HepG2 (cell line): ENCODE measurements at regions of chr16 and their contacts with region 1.

Region 1: DNA sequence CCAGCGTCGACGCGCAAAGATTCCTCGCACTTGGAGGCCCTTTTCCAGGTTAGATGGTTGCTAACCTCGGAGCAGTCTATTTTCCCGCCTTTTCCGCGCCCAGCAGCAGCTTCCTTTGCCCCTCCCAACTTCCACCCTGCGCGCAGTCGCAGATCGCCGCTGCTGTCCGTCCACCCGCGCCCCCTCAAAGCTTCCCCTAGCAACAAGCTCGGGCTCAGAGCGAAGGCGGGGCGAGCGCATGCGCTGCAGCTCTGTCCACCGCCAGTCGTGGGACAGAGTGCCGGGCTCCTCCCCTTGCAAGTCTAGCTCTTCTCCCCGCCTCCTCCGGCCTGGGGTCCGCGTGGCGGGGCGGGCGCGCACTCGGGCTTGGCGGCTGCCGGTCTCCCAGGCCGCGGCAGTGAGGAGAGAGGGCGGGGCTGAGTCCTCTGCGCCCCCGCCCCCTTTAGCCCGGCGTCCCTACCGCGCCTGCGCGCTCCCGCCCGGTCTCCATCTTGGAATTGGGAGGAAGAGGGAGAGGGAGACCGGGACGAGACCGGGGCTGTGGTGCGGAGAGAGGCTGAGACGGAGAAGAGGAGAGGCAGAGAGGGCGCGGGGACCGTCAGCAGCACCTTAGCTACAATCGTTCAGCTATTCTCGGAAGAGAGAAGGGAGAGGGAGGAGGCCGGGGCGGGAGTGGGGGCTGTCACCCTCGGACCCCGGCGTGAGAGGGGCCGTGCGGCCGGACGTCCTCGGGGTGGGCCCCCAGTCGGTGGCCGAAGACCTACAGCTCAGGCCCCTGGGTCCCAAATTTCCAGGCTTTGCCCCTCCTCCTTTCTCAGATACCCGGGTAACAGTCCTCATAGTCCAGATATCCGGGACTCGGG is at the start of gene TAOK2:
- DNase-seq: peak; percentile 98
- ATAC-seq: peak; percentile 95
- H3K4me3 ChIP-seq: peak within 1 kb of the TSS; percentile 86 to 99 (median 91)
- H3K27ac ChIP-seq: peak within 1 kb of the TSS; percentile 72
- H3K4me1 ChIP-seq: peaks cover 30% of the 10 kb centered on the region
- H3K27me3 ChIP-seq: no peaks in the 10 kb centered on the region; a peak in 1 of 5 replicates
- CTCF ChIP-seq: peak; percentile 11; the same call in 1 of the 2 replicates
- EP300 ChIP-seq: peak in 1 of 2 experiments; percentile 65; a peak in 2 of 4 replicates
- POLR2A ChIP-seq: peak; percentile 72 to 89
- RAD21 ChIP-seq: peak; percentile 5
- total RNA-seq, gene TAOK2: 27.6 and 43.2 TPM in 2 replicates

Region 2: GRCh38 chr16:28991687-28992086 is 981.9 kb before region 1 on chr16:
- CTCF ChIA-PET with region 1: no interaction called
- POLR2A ChIA-PET with region 1: no interaction called
- in situ Hi-C with region 1: no loop called
- intact Hi-C with region 1: no loop called
- DNase-seq: no peak
- ATAC-seq: peak; percentile 42
- H3K4me3 ChIP-seq: no peak overlapping the region
- H3K27ac ChIP-seq: no peak overlapping the region
- H3K4me1 ChIP-seq: peaks cover 8% of the 10 kb centered on the region
- H3K27me3 ChIP-seq: no peaks in the 10 kb centered on the region
- CTCF ChIP-seq: no peak
- EP300 ChIP-seq: no peak
- POLR2A ChIP-seq: no peak
- RAD21 ChIP-seq: no peak

Region 3: GRCh38 chr16:29852654-29853053 is 121.0 kb before region 1 on chr16:
- CTCF ChIA-PET with region 1: no interaction called
- POLR2A ChIA-PET with region 1: no interaction called
- in situ Hi-C with region 1: no loop called
- intact Hi-C with region 1: no loop called
- DNase-seq: no peak
- ATAC-seq: no peak
- H3K4me3 ChIP-seq: no peak overlapping the region
- H3K27ac ChIP-seq: no peak overlapping the region
- H3K4me1 ChIP-seq: no peaks in the 10 kb centered on the region
- H3K27me3 ChIP-seq: no peaks in the 10 kb centered on the region
- CTCF ChIP-seq: no peak
- EP300 ChIP-seq: no peak
- POLR2A ChIP-seq: no peak
- RAD21 ChIP-seq: no peak

Region 4: GRCh38 chr16:29891525-29892457 is 81.8 kb before region 1 on chr16:
- CTCF ChIA-PET with region 1: no interaction called
- POLR2A ChIA-PET with region 1: no interaction called
- in situ Hi-C with region 1: no loop called
- intact Hi-C with region 1: no loop called
- DNase-seq: peak; percentile 95
- ATAC-seq: peak; percentile 87
- H3K4me3 ChIP-seq: peak overlapping the region in 2 of 3 experiments; percentile 2 to 31; a peak in 2 of 6 replicates
- H3K27ac ChIP-seq: peak overlapping the region; percentile 86
- H3K4me1 ChIP-seq: peaks cover 32% of the 10 kb centered on the region
- H3K27me3 ChIP-seq: no peaks in the 10 kb centered on the region
- CTCF ChIP-seq: no peak
- EP300 ChIP-seq: peak; percentile 62 to 75; a peak in 2 of 4 replicates
- POLR2A ChIP-seq: no peak
- RAD21 ChIP-seq: no peak

Region 5: GRCh38 chr16:29915590-29916247 is 57.9 kb before region 1 on chr16:
- CTCF ChIA-PET with region 1: no interaction called
- POLR2A ChIA-PET with region 1: interaction called, 11 read pairs
- in situ Hi-C with region 1: no loop called
- intact Hi-C with region 1: no loop called
- DNase-seq: peak; percentile 63
- ATAC-seq: no peak
- H3K4me3 ChIP-seq: no peak overlapping the region
- H3K27ac ChIP-seq: peak overlapping the region; percentile 55
- H3K4me1 ChIP-seq: peaks cover 14% of the 10 kb centered on the region
- H3K27me3 ChIP-seq: no peaks in the 10 kb centered on the region
- CTCF ChIP-seq: no peak
- EP300 ChIP-seq: no peak
- POLR2A ChIP-seq: no peak
- RAD21 ChIP-seq: no peak

Region 6: GRCh38 chr16:29943846-29944669 is 29.6 kb before region 1 on chr16:
- CTCF ChIA-PET with region 1: no interaction called
- POLR2A ChIA-PET with region 1: interaction called, 10 read pairs
- in situ Hi-C with region 1: no loop called
- intact Hi-C with region 1: loop called (anchors 1 kb)
- DNase-seq: peak; percentile 91
- ATAC-seq: peak; percentile 97
- H3K4me3 ChIP-seq: peak overlapping the region; percentile 39 to 51 (median 41)
- H3K27ac ChIP-seq: peak overlapping the region; percentile 62
- H3K4me1 ChIP-seq: peaks cover 38% of the 10 kb centered on the region
- H3K27me3 ChIP-seq: no peaks in the 10 kb centered on the region
- CTCF ChIP-seq: peak; percentile 41; the same call in 1 of the 2 replicates
- EP300 ChIP-seq: peak in 1 of 2 experiments; percentile 29; a peak in 2 of 4 replicates
- POLR2A ChIP-seq: peak; percentile 22 to 50; a peak in 2 of 4 replicates
- RAD21 ChIP-seq: no peak

Region 7: DNA sequence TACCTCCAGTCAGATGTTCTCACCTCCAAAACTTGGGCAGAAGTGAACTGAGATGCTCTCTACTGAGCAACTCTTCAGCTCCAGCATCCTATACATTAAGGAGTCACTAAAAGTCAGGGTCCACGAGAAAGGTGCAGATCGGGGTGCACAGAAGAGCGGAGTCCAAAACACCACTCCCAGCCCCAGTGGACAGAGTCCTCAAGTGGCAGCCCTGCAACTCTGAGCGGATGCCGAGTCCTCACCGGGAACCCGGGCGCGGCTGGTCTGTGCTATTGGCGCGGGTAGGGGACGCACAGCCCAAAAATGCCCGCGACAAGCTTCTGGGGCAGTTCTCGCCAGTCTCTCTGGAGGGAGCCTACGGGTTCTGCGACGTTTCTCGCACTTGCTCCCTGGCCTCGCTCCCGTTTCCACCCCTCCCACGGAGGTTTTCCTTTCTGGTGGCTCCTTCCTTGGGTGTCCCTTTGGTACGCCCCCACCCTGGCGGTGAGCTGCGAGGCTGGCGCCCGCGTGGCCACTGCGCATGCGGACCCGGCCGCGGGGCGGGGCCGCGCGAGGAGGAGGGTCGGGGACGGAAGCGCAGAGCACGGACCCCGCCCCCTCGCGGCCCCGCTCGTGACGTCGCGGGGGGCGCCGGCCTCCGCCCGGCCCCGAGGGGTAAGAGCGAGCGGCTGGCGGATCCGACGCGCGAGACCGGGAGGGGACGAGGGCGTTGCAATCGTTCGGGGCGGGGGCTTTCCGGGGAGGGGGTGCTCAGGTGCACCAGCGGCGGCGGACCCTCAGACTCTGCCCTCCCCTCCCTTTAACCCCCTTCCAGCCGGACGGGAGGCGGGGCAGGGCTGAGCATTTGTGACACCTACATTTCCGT is 11.9 kb before region 1 on chr16 and contains the start of gene TMEM219:
- CTCF ChIA-PET with region 1: no interaction called
- POLR2A ChIA-PET with region 1: interaction called, 47 read pairs
- in situ Hi-C with region 1: no loop called
- intact Hi-C with region 1: no loop called
- DNase-seq: peak; percentile 81
- ATAC-seq: peak; percentile 78
- H3K4me3 ChIP-seq: peak within 1 kb of the TSS; percentile 65 to 87 (median 80)
- H3K27ac ChIP-seq: peak within 1 kb of the TSS; percentile 81
- H3K4me1 ChIP-seq: peaks cover 56% of the 10 kb centered on the region
- H3K27me3 ChIP-seq: no peaks in the 10 kb centered on the region; a peak in 1 of 5 replicates
- CTCF ChIP-seq: no peak; the same call in 1 of the 2 replicates
- EP300 ChIP-seq: no peak
- POLR2A ChIP-seq: peak; percentile 70 to 89
- RAD21 ChIP-seq: peak; percentile 71
- total RNA-seq, gene TMEM219: 64.5 and 105 TPM in 2 replicates

Region 8: DNA sequence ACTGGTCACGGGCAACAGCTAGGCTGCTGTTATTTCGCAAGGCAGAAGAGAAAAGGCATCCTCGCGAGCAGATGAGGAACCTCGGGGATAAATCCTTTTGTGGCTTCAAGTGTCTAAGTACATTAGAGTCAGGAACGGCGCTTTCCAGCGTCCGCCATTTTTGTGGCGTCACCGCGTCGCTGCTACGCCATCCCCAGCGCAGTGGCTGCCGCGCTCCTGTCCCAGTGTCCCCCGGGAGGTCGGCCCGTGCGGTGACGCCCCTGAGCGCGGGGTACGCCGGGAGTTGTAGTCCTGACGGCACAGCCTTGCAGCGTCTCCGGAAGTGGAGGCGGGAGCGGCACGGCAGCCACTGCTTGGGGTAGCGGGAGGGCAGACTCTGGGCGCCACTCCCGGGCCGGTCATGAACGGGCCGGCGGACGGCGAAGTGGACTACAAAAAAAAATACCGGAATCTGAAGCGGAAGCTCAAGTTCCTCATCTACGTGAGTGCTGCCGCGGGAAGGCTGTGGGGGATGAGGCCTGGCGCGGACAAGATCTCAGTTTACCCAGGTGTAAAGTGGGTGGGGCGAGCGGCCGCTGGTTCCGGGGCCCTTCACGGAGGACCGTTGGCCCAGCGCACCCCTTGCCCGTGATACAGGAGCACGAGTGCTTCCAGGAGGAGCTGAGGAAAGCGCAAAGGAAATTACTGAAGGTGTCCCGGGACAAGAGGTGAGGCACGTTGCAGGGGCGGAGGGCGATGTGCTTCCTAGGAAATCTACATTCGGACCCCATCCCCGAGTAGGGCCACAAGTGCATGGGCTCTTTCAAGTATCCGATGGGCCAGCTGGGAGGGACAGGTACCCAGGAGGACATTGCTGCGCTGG is 22.5 kb after region 1 on chr16 and contains the start of gene INO80E:
- CTCF ChIA-PET with region 1: no interaction called
- POLR2A ChIA-PET with region 1: interaction called, 16 read pairs
- in situ Hi-C with region 1: no loop called
- intact Hi-C with region 1: no loop called
- DNase-seq: peak; percentile 94
- ATAC-seq: peak; percentile 96
- H3K4me3 ChIP-seq: peak within 1 kb of the TSS; percentile 92 to 95 (median 94)
- H3K27ac ChIP-seq: peak within 1 kb of the TSS; percentile 87
- H3K4me1 ChIP-seq: peaks cover 24% of the 10 kb centered on the region
- H3K27me3 ChIP-seq: peaks cover 0 to 5% of the 10 kb centered on the region in 2 experiments; a peak in 1 of 5 replicates
- CTCF ChIP-seq: peak; percentile 45; the same call in 1 of the 2 replicates
- EP300 ChIP-seq: no peak
- POLR2A ChIP-seq: peak; percentile 79 to 82
- RAD21 ChIP-seq: peak; percentile 44; the same call in 1 of the 2 replicates
- total RNA-seq, gene INO80E: 39.5 and 45.6 TPM in 2 replicates

Region 9: DNA sequence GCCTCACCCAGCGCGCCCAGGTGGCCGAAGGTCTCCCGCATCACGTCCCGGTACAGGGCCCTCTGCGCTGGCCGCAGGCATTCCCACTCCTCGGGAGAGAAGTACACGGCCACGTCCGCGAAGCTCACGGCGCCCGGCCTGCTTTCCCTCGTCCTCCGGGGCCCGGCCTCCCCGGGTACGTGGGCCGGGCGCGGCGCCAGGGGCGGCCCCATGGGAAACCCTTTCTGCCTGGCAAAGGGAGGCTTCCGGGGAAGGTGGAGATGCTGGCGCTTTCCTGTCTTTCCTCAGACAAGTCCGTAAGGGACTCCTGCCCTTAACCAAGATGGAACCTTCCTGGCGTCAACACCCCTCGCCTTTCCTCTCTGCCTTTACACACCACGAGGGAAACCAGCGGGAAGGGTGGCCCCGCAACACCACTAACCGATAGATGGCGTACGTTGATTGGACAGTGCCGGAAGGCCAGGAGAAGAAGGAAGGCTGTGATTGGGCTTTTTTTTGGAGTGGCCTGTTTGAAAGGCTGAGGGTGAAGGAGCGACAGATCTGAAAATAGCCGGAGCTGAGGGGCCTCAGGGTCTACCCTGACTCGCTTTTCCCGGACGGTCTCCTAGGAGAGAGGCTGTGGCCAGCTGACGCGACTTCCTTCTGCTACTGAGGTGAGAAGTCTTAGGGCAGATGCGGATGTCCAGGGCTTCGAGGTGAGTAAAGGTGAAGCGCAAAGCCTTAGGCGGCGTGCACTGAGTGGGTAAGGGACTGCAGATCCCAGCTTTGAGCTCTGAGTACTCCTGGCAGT is 612.0 kb after region 1 on chr16 and contains the start of gene ZNF785:
- CTCF ChIA-PET with region 1: no interaction called
- POLR2A ChIA-PET with region 1: no interaction called
- in situ Hi-C with region 1: no loop called
- intact Hi-C with region 1: no loop called
- DNase-seq: no peak
- ATAC-seq: no peak; the same call in 2 of the 3 replicates
- H3K4me3 ChIP-seq: no peak within 1 kb of the TSS
- H3K27ac ChIP-seq: no peak within 1 kb of the TSS
- H3K4me1 ChIP-seq: peaks cover 12% of the 10 kb centered on the region
- H3K27me3 ChIP-seq: no peaks in the 10 kb centered on the region
- CTCF ChIP-seq: 0 out of 2 replicates have a peak, but pooled peaks have one; percentile 13
- EP300 ChIP-seq: no peak
- POLR2A ChIP-seq: no peak
- RAD21 ChIP-seq: no peak
- total RNA-seq, gene ZNF785: not detected in 2 replicates